CD8-positive, alpha-beta T cell (primary cell): ENCODE measurements at regions of chr5 and their contacts with region 1.

Region 1: DNA sequence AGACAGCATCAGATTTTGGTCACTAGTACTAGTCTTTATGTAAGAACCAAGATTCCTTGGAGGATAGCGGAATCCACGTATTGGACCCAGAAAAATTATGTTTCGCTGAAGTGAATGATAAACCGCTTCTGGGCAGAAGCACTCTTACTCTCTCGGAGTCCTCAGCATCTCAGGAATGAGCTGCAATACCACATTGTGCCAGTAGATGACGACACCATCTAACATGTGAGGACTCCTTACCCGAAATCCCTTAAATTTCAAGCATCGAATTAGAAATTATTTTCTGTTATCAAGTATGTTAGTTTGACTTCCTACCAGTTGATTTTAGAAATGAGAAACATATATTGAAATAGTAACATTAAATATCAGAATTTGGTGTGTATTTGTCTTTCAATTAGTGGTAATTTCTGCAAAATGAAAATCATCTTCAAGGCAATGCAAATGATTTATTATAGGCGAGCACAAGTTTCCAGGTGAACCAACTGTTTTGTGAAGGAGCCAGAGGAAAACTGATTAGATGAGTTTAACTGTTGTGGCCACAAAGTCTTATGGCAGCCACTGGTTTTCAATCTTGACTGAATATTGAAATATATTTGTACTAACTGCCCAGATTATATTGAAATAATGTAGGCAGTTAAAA is 66.0 kb upstream of the CAMK4 start:
- DNase-seq: peak; percentile 59 to 87 (median 83)
- ATAC-seq: peak; percentile 99
- H3K4me3 ChIP-seq: no peak overlapping the region
- H3K4me3 Mint-ChIP-seq: no peak overlapping the region
- H3K27ac ChIP-seq: no peak overlapping the region
- H3K27ac Mint-ChIP-seq: no peak overlapping the region
- H3K4me1 ChIP-seq: no peaks in the 10 kb centered on the region
- H3K4me1 Mint-ChIP-seq: peaks cover 3% of the 10 kb centered on the region
- H3K27me3 ChIP-seq: no peaks in the 10 kb centered on the region
- H3K27me3 Mint-ChIP-seq: peaks cover 3% of the 10 kb centered on the region
- CTCF ChIP-seq: peak; percentile 100

Region 2: GRCh38 chr5:111172504-111172903 is 14.3 kb after region 1 on chr5:
- CTCF ChIA-PET with region 1: interaction called, 22 read pairs
- POLR2A ChIA-PET with region 1: no interaction called
- intact Hi-C with region 1: no loop called
- DNase-seq: peak in 2 of 9 experiments; percentile 3 to 20
- ATAC-seq: no peak
- H3K4me3 ChIP-seq: no peak overlapping the region
- H3K4me3 Mint-ChIP-seq: no peak overlapping the region
- H3K27ac ChIP-seq: no peak overlapping the region
- H3K27ac Mint-ChIP-seq: no peak overlapping the region
- H3K4me1 ChIP-seq: no peaks in the 10 kb centered on the region
- H3K4me1 Mint-ChIP-seq: peaks cover 3% of the 10 kb centered on the region
- H3K27me3 ChIP-seq: no peaks in the 10 kb centered on the region
- H3K27me3 Mint-ChIP-seq: no peaks in the 10 kb centered on the region
- CTCF ChIP-seq: no peak

Region 3: GRCh38 chr5:111284825-111285224 is 126.6 kb after region 1 on chr5:
- CTCF ChIA-PET with region 1: interaction called, 203 read pairs
- POLR2A ChIA-PET with region 1: interaction called, 3 read pairs
- intact Hi-C with region 1: no loop called
- DNase-seq: no peak
- ATAC-seq: no peak
- H3K4me3 ChIP-seq: no peak overlapping the region
- H3K4me3 Mint-ChIP-seq: no peak overlapping the region
- H3K27ac ChIP-seq: no peak overlapping the region
- H3K27ac Mint-ChIP-seq: no peak overlapping the region
- H3K4me1 ChIP-seq: peaks cover 34% of the 10 kb centered on the region
- H3K4me1 Mint-ChIP-seq: peaks cover 85% of the 10 kb centered on the region
- H3K27me3 ChIP-seq: no peaks in the 10 kb centered on the region
- H3K27me3 Mint-ChIP-seq: no peaks in the 10 kb centered on the region
- CTCF ChIP-seq: no peak

Region 4: DNA sequence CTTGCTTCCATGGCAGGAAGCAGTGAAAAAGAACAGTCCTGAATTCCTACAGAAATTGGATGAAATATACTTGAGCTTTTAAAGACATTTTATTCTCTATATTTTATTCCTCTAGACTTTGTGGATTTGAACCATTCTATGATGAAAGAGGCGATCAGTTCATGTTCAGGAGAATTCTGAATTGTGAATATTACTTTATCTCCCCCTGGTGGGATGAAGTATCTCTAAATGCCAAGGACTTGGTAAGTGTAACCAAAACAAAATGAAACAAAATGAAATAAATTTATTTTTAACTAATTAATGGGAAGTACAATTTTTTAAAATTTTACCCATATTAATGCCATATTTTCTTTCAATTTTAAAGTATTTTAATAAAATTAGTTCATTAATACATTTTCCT is 320.0 kb after region 1 on chr5:
- CTCF ChIA-PET with region 1: interaction called, 15 read pairs
- POLR2A ChIA-PET with region 1: interaction called, 4 read pairs
- intact Hi-C with region 1: loop called (anchors 1 to 5 kb)
- DNase-seq: no peak
- ATAC-seq: no peak
- H3K4me3 ChIP-seq: no peak overlapping the region
- H3K4me3 Mint-ChIP-seq: no peak overlapping the region
- H3K27ac ChIP-seq: no peak overlapping the region
- H3K27ac Mint-ChIP-seq: no peak overlapping the region
- H3K4me1 ChIP-seq: no peaks in the 10 kb centered on the region
- H3K4me1 Mint-ChIP-seq: no peaks in the 10 kb centered on the region
- H3K27me3 ChIP-seq: no peaks in the 10 kb centered on the region
- H3K27me3 Mint-ChIP-seq: no peaks in the 10 kb centered on the region
- CTCF ChIP-seq: no peak